ENCODE measurements at regions of chr1 and their contacts with region 1.

Region 1: DNA sequence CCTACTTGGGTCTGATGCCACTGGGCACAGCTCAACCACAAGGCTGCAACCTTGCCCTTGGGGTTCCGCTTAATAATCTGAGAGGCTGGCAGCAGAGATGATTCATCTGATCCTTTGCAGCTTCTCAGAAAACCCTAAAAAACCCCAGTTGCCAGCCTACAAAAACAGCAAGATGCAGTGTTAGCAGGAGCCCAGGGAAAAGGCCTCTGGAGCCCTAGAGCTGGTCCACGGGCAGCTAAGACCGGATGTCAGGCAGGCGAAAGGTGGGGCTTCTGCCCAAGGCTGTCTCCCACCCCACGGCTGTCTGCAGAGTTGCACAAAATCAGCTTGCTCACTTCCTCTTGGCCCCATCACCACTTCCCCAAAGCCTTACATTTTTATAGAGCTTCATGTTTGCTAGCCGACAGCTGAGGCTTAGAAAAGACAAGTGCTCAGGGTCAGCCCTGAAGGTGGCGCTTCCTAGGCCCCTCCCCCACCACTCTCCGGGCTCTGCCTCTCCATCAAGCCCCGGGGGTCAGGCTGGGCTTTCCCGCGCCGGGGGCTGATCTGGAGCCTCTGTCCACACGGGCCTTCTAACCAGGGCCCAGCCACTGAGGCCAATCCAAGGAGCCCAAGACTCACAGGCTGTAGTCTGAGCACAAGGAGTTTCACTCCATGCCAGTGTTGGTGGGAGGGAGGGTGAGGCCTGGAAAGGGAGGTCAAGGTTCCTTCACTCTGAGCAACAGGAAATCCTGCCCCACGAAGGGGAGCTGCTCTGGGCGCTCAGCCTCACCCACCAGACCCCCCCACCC is 4.2 kb upstream of the ADORA3 start:
- DNase-seq: peak; percentile 83
- H3K4me3 Mint-ChIP-seq: peak overlapping the region; percentile 62
- H3K27ac Mint-ChIP-seq: peak overlapping the region; percentile 94
- H3K4me1 Mint-ChIP-seq: peaks cover 62% of the 10 kb centered on the region
- H3K27me3 Mint-ChIP-seq: no peaks in the 10 kb centered on the region

Region 2: DNA sequence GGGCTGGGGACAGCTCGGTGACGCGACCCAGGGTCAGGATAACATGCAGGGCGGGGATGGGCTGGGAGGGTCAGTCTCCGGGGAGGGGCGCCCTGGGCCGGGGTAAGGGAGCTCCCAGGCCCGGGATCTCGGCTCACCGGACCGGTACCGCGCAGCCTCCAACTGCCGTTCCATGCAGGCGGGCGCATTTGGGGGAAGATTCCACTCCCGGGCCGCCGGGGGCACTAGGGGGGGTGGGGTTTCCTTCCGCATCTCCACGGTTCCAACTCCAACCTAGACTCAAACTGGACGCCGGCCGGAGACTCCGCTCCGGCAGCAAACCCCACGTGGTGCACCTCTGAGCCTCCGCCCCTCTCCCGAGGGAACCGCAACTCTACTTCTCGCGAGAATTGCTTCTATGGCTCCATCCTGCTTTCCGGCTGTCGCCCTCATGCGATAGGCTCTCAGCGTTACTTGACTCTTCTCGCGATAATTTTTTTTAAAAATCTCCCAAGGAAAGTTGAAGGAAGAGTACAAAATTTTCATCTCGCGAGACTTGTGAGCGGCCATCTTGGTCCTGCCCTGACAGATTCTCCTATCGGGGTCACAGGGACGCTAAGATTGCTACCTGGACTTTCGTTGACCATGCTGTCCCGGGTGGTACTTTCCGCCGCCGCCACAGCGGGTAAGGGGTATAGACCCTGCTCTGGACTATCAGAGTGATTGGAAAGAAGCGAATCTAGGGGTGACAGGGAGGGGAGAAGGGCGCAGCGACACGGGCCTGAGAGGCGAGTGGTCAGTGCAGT is 58.5 kb before region 1 on chr1 and contains the starts of genes ATP5PB and WDR77:
- CTCF ChIA-PET with region 1: interaction called, 11 read pairs
- POLR2A ChIA-PET with region 1: interaction called, 3 read pairs
- intact Hi-C with region 1: loop called (anchors 2 kb)
- DNase-seq: peak; percentile 95
- H3K4me3 Mint-ChIP-seq: peak within 1 kb of the TSS; percentile 100
- H3K27ac Mint-ChIP-seq: peak within 1 kb of the TSS; percentile 94
- H3K4me1 Mint-ChIP-seq: peaks cover 73% of the 10 kb centered on the region
- H3K27me3 Mint-ChIP-seq: no peaks in the 10 kb centered on the region
- total RNA-seq, gene ATP5PB: 300 to 302 TPM
- total RNA-seq, gene WDR77: 44.6 to 48.4 TPM

Region 3: GRCh38 chr1:111497592-111497991 is 10.0 kb before region 1 on chr1:
- CTCF ChIA-PET with region 1: interaction called, 32 read pairs
- POLR2A ChIA-PET with region 1: interaction called, 29 read pairs
- intact Hi-C with region 1: no loop called
- DNase-seq: no peak
- H3K4me3 Mint-ChIP-seq: no peak overlapping the region
- H3K27ac Mint-ChIP-seq: no peak overlapping the region
- H3K4me1 Mint-ChIP-seq: peaks cover 34% of the 10 kb centered on the region
- H3K27me3 Mint-ChIP-seq: no peaks in the 10 kb centered on the region

Region 4: DNA sequence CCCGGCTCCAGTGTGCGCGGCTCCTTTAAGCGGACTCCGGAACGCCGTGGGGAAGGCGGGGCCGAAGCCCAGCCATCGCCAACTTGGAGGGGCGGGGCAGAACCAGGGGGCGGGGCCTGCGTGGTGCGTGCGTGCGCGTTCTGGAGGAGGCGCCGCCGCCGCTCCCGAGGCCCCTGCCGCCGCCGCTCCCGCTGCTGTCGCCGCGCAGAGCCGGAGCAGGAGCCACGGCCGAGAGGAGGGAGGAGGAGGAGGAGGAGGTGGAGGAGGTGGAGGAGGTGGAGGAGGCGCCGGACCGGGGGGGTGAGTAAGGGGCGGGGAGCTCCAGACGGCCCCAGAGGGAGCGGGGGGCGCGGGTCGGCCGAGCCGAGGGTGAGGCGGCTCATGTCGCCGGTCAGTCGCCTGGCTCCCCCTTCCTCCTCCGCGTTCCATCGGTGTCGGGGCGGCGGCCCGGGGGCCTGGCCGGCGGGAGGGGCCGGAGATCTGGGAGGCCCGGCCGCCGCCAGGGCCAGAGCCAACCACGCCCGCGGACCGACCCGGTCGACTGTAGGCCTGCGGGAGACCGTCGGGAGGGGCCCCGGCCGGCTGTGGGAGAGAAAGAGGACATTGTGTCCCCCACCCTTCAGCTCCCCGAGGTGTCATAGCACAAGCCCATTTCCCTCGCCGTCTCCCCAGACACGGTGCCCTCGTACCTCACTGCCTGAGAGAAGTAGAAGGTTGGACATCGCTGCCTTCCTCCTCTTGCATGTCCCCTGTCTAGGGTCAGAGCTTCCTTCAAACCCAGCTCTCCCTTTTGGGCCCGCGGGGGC is 112.2 kb after region 1 on chr1 and contains the start of gene RAP1A:
- CTCF ChIA-PET with region 1: interaction called, 104 read pairs
- POLR2A ChIA-PET with region 1: interaction called, 21 read pairs
- intact Hi-C with region 1: loop called (anchors 1 kb)
- DNase-seq: peak; percentile 97
- H3K4me3 Mint-ChIP-seq: peak within 1 kb of the TSS; percentile 95
- H3K27ac Mint-ChIP-seq: peak within 1 kb of the TSS; percentile 97
- H3K4me1 Mint-ChIP-seq: peaks cover 65% of the 10 kb centered on the region
- H3K27me3 Mint-ChIP-seq: no peaks in the 10 kb centered on the region
- total RNA-seq, gene RAP1A: 292 to 294 TPM

Region 5: GRCh38 chr1:111664652-111665051 is 157.0 kb after region 1 on chr1:
- CTCF ChIA-PET with region 1: interaction called, 28 read pairs
- POLR2A ChIA-PET with region 1: no interaction called
- intact Hi-C with region 1: no loop called
- DNase-seq: no peak
- H3K4me3 Mint-ChIP-seq: no peak overlapping the region
- H3K27ac Mint-ChIP-seq: peak overlapping the region; percentile 31
- H3K4me1 Mint-ChIP-seq: peaks cover 63% of the 10 kb centered on the region
- H3K27me3 Mint-ChIP-seq: no peaks in the 10 kb centered on the region

Region 6: GRCh38 chr1:111720274-111720976 is 212.8 kb after region 1 on chr1:
- CTCF ChIA-PET with region 1: interaction called, 54 read pairs
- POLR2A ChIA-PET with region 1: no interaction called
- intact Hi-C with region 1: loop called (anchors 2 kb)
- DNase-seq: no peak
- H3K4me3 Mint-ChIP-seq: no peak overlapping the region
- H3K27ac Mint-ChIP-seq: peak overlapping the region; percentile 38
- H3K4me1 Mint-ChIP-seq: peaks cover 18% of the 10 kb centered on the region
- H3K27me3 Mint-ChIP-seq: no peaks in the 10 kb centered on the region

Region 7: DNA sequence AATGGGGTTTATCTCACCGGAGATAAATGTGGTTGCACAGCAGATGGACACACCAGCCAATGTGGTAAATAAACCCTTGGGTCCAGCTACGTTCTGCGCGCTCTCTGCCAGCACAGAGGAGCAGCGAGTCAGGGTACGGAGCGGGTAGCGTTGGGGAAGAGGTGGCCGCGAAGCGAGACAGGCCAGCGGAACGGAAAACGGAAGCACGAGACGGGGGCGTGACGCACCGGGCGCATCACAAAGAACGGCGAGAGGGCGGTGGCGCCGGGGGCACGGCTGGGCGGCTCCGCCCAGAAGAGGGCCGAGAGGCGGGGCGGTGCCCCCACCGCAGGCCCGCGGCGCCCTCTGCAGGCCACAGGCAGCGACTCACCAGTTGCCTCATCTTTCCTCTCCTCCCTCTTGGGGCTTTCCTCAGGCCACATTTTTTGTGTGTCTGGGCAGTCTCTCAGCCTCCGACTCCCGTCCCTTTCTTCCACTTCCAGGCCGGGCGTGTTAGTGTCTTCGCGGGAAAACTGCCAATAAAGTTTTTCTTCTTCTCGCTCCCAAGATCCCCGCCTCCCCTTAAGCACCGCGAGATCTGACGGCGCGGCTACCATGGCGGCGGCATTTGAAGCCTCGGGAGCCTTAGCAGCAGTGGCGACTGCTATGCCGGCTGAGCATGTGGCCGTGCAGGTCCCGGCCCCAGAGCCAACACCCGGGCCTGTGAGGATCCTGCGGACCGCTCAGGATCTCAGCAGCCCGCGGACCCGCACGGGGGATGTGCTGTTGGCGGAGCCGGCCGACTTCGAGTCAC is 247.9 kb after region 1 on chr1 and contains the start of gene DDX20:
- CTCF ChIA-PET with region 1: interaction called, 30 read pairs
- POLR2A ChIA-PET with region 1: interaction called, 8 read pairs
- intact Hi-C with region 1: loop called (anchors 2 kb)
- DNase-seq: peak; percentile 96
- H3K4me3 Mint-ChIP-seq: peak within 1 kb of the TSS; percentile 84
- H3K27ac Mint-ChIP-seq: peak within 1 kb of the TSS; percentile 97
- H3K4me1 Mint-ChIP-seq: peaks cover 35% of the 10 kb centered on the region
- H3K27me3 Mint-ChIP-seq: no peaks in the 10 kb centered on the region
- total RNA-seq, gene DDX20: 14.2 to 15.9 TPM

Region 8: DNA sequence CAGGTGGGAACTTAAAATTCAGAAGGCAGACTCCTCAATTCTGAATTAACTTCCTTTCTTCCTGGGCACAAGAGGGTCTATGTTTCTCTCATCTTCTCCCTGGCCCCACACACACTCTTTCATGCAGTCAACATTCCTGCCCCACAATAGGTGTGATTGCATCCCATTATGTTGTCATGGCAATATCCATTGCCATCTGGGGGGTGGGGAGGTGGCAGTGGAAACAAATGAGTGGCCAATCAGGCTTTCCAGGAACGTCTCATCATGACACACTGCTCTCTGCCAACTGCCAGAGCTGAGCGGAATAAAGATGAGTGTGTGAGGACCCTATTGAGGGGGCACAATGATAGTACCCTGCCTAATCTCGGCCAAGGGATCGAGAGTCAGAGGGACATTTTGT is 401.4 kb after region 1 on chr1:
- CTCF ChIA-PET with region 1: no interaction called
- POLR2A ChIA-PET with region 1: no interaction called
- intact Hi-C with region 1: no loop called
- DNase-seq: no peak
- H3K4me3 Mint-ChIP-seq: no peak overlapping the region
- H3K27ac Mint-ChIP-seq: no peak overlapping the region
- H3K4me1 Mint-ChIP-seq: peaks cover 12% of the 10 kb centered on the region
- H3K27me3 Mint-ChIP-seq: peaks cover 28% of the 10 kb centered on the region